Aorta (tissue), 5 donors: ENCODE measurements at regions of chr11 and their contacts with region 1.

Region 1: GRCh38 chr11:85627998-85628770 is at the start of gene TMEM126B:
- DNase-seq: peak; percentile 99
- ATAC-seq: peak; percentile 100
- H3K4me3 ChIP-seq: peak within 1 kb of the TSS; percentile 91 to 95
- H3K27ac ChIP-seq: peak within 1 kb of the TSS; percentile 78 to 95
- H3K4me1 ChIP-seq: peaks cover 0 to 8% of the 10 kb centered on the region in 2 donors
- H3K27me3 ChIP-seq: no peaks in the 10 kb centered on the region
- total RNA-seq, gene TMEM126B: 39.7 to 40.5 TPM

Region 2: GRCh38 chr11:85517272-85517671 is 110.9 kb before region 1 on chr11:
- intact Hi-C with region 1: no loop called
- DNase-seq: no peak
- ATAC-seq: no peak
- H3K4me3 ChIP-seq: no peak overlapping the region
- H3K27ac ChIP-seq: no peak overlapping the region
- H3K4me1 ChIP-seq: no peaks in the 10 kb centered on the region
- H3K27me3 ChIP-seq: no peaks in the 10 kb centered on the region

Region 3: DNA sequence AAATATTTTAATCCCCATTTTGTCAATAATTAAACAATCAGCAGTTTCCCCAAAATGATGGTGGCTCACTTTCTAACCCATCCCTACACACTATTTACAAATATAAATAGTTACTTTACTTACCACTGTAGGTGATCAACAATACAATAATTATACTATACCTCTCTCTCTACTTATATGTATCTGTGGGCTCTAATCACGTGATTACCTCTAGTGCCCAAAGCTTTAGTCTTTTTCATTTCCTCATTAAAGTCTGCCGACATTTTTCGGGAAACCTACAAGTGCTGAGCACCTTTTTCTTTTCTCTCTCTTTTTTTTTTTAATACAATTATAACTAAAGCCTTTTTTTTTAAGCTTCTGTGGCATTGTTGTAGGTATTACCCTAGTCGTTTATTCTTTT is 25.0 kb before region 1 on chr11:
- intact Hi-C with region 1: no loop called
- DNase-seq: no peak
- ATAC-seq: no peak
- H3K4me3 ChIP-seq: no peak overlapping the region
- H3K27ac ChIP-seq: no peak overlapping the region
- H3K4me1 ChIP-seq: no peaks in the 10 kb centered on the region
- H3K27me3 ChIP-seq: no peaks in the 10 kb centered on the region

Region 4: DNA sequence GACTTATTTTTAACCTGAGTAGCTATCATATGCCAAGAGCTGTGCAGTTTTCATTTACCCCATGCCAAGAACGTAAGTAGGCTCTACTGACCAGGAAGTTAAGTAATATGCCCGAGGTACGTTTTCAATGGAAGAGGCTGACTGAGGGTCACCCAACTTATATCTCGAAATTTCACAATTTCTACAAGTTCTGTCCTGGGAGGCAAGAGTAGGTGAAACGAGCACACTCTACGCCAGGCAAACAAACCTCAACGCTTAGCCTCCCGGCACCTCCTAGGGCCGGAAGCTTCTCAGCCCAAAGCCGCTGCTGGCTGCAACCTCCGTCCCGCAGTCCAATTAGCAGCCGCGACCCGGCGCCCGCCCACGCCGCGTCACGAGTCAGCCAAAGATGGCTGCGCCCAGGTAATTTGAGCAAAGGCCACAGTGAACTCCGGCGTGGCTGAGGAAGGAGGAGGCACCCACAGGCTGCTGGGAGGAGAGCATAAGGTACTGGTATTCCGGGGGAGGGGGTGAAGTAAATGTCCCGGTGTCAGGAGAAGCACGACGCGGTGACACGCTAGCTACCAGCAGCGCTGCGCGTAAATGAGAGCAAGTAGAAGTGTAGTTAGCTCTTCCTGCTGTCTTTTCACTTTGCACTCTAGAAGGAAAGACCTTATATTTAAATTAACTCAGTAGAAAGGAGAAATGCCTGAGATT is 19.6 kb after region 1 on chr11 and contains the start of gene TMEM126A:
- intact Hi-C with region 1: loop called in 1 of 2 experiments (anchors 2 kb)
- DNase-seq: peak; percentile 93 to 97
- ATAC-seq: peak; percentile 98
- H3K4me3 ChIP-seq: peak within 1 kb of the TSS; percentile 61 to 92
- H3K27ac ChIP-seq: peak within 1 kb of the TSS in 1 of 2 donors; percentile 81
- H3K4me1 ChIP-seq: no peaks in the 10 kb centered on the region
- H3K27me3 ChIP-seq: no peaks in the 10 kb centered on the region
- total RNA-seq, gene TMEM126A: 19.9 to 23.9 TPM

Region 5: GRCh38 chr11:85664615-85665481 is 36.7 kb after region 1 on chr11 and contains the start of gene CREBZF:
- intact Hi-C with region 1: loop called in 1 of 2 experiments (anchors 1 kb)
- DNase-seq: peak; percentile 97 to 98
- ATAC-seq: peak; percentile 99
- H3K4me3 ChIP-seq: peak within 1 kb of the TSS; percentile 45 to 59
- H3K27ac ChIP-seq: peak within 1 kb of the TSS; percentile 92 to 99
- H3K4me1 ChIP-seq: no peaks in the 10 kb centered on the region
- H3K27me3 ChIP-seq: no peaks in the 10 kb centered on the region
- total RNA-seq, gene CREBZF: 44.5 to 59.1 TPM

Region 6: GRCh38 chr11:85679576-85679975 is 51.4 kb after region 1 on chr11:
- intact Hi-C with region 1: no loop called
- DNase-seq: no peak
- ATAC-seq: no peak
- H3K4me3 ChIP-seq: no peak overlapping the region
- H3K27ac ChIP-seq: no peak overlapping the region
- H3K4me1 ChIP-seq: no peaks in the 10 kb centered on the region
- H3K27me3 ChIP-seq: no peaks in the 10 kb centered on the region